ENCODE measurements at regions of chr1 and their contacts with region 1.

Region 1: GRCh38 chr1:168234846-168235547 is 9.2 kb downstream of the SFT2D2 start:
- DNase-seq: peak; percentile 58
- ATAC-seq: peak; percentile 77
- H3K4me3 Mint-ChIP-seq: no peak overlapping the region
- H3K27ac Mint-ChIP-seq: peak overlapping the region; percentile 55
- H3K4me1 Mint-ChIP-seq: peaks cover 57% of the 10 kb centered on the region
- H3K27me3 Mint-ChIP-seq: no peaks in the 10 kb centered on the region

Region 2: DNA sequence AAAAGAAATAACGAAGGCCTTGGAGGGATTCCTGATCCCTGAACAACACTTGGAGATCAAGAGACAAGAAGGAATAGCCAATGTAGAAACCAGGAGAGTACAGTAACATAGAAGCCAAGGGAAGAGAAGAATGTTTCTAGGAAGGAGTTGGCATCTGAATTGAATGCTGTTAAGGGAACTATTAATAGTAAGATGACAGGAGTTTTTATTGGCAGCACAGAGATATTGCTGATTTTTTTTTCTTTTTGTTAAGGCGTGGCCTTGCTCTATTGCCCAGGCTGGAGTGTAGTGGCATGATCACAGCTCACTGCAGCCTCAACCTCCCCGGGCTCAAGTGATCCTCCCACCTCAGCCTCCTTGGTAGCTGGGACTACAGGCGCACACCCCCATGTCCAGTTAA is 18.8 kb before region 1 on chr1:
- CTCF ChIA-PET with region 1: interaction called, 12 read pairs
- POLR2A ChIA-PET with region 1: no interaction called
- intact Hi-C with region 1: no loop called
- DNase-seq: no peak
- ATAC-seq: no peak
- H3K4me3 Mint-ChIP-seq: no peak overlapping the region
- H3K27ac Mint-ChIP-seq: no peak overlapping the region
- H3K4me1 Mint-ChIP-seq: peaks cover 9% of the 10 kb centered on the region
- H3K27me3 Mint-ChIP-seq: peaks cover 2% of the 10 kb centered on the region

Region 3: GRCh38 chr1:168360151-168361021 is 125.4 kb after region 1 on chr1:
- CTCF ChIA-PET with region 1: interaction called, 7 read pairs
- POLR2A ChIA-PET with region 1: no interaction called
- intact Hi-C with region 1: loop called in 1 of 2 experiments (anchors 5 kb)
- DNase-seq: peak; percentile 67
- ATAC-seq: peak; percentile 40
- H3K4me3 Mint-ChIP-seq: no peak overlapping the region
- H3K27ac Mint-ChIP-seq: no peak overlapping the region
- H3K4me1 Mint-ChIP-seq: peaks cover 40% of the 10 kb centered on the region
- H3K27me3 Mint-ChIP-seq: no peaks in the 10 kb centered on the region

Region 4: GRCh38 chr1:168466092-168466713 is 231.2 kb after region 1 on chr1:
- CTCF ChIA-PET with region 1: interaction called, 3 read pairs
- POLR2A ChIA-PET with region 1: no interaction called
- intact Hi-C with region 1: loop called in 1 of 2 experiments (anchors 5 kb)
- DNase-seq: peak; percentile 77
- ATAC-seq: peak; percentile 93
- H3K4me3 Mint-ChIP-seq: no peak overlapping the region
- H3K27ac Mint-ChIP-seq: peak overlapping the region; percentile 72
- H3K4me1 Mint-ChIP-seq: peaks cover 56% of the 10 kb centered on the region
- H3K27me3 Mint-ChIP-seq: no peaks in the 10 kb centered on the region

Measured in activated CD4-positive, alpha-beta T cell treated with anti-CD3 and anti-CD28 coated beads for 36 hours (primary cell).